T-cell (primary cell): ENCODE measurements at regions of chr16 and their contacts with region 1.

Region 1: GRCh38 chr16:55494994-55495421 is 13.9 kb upstream of the LPCAT2 start:
- DNase-seq: no peak
- ATAC-seq: no peak
- H3K4me3 ChIP-seq: no peak overlapping the region
- H3K4me3 Mint-ChIP-seq: no peak overlapping the region
- H3K27ac ChIP-seq: no peak overlapping the region
- H3K27ac Mint-ChIP-seq: no peak overlapping the region
- H3K4me1 ChIP-seq: peaks cover 0 to 6% of the 10 kb centered on the region in 2 experiments
- H3K4me1 Mint-ChIP-seq: peaks cover 3 to 6% (median 6%) of the 10 kb centered on the region in 3 donors
- H3K27me3 ChIP-seq: peaks cover 0 to 15% of the 10 kb centered on the region in 2 experiments
- H3K27me3 Mint-ChIP-seq: peaks cover 5 to 7% of the 10 kb centered on the region in 2 donors

Region 2: GRCh38 chr16:55842369-55843104 is 347.5 kb after region 1 on chr16:
- CTCF ChIA-PET with region 1: interaction called, 3 to 10 read pairs
- POLR2A ChIA-PET with region 1: no interaction called
- DNase-seq: peak in 8 of 35 experiments; percentile 0 to 61 (median 8)
- ATAC-seq: peak in 2 of 4 experiments; percentile 42 to 54
- H3K4me3 ChIP-seq: no peak overlapping the region
- H3K4me3 Mint-ChIP-seq: no peak overlapping the region
- H3K27ac ChIP-seq: no peak overlapping the region
- H3K27ac Mint-ChIP-seq: no peak overlapping the region
- H3K4me1 ChIP-seq: no peaks in the 10 kb centered on the region
- H3K4me1 Mint-ChIP-seq: peaks cover 0 to 3% (median 0%) of the 10 kb centered on the region in 3 donors
- H3K27me3 ChIP-seq: peaks cover 0 to 19% of the 10 kb centered on the region in 2 experiments
- H3K27me3 Mint-ChIP-seq: peaks cover 10 to 17% of the 10 kb centered on the region in 2 donors